Activated CD4-positive, alpha-beta T cell treated with anti-CD3 and anti-CD28 coated beads for 36 hours (primary cell): ENCODE measurements at regions of chr17 and their contacts with region 1.

Region 1: GRCh38 chr17:50865984-50866774 is at the start of gene TOB1:
- DNase-seq: peak; percentile 99
- ATAC-seq: peak; percentile 78
- H3K4me3 Mint-ChIP-seq: peak within 1 kb of the TSS; percentile 96
- H3K27ac Mint-ChIP-seq: peak within 1 kb of the TSS; percentile 98
- H3K4me1 Mint-ChIP-seq: peaks cover 44% of the 10 kb centered on the region
- H3K27me3 Mint-ChIP-seq: no peaks in the 10 kb centered on the region
- total RNA-seq, gene TOB1: 31.3 to 43.0 TPM

Region 2: GRCh38 chr17:50213026-50214022 is 652.9 kb before region 1 on chr17:
- CTCF ChIA-PET with region 1: no interaction called
- POLR2A ChIA-PET with region 1: no interaction called
- intact Hi-C with region 1: no loop called
- DNase-seq: peak; percentile 81
- ATAC-seq: peak; percentile 99
- H3K4me3 Mint-ChIP-seq: no peak overlapping the region
- H3K27ac Mint-ChIP-seq: no peak overlapping the region
- H3K4me1 Mint-ChIP-seq: peaks cover 16% of the 10 kb centered on the region
- H3K27me3 Mint-ChIP-seq: peaks cover 4% of the 10 kb centered on the region

Region 3: GRCh38 chr17:50345432-50346312 is 520.5 kb before region 1 on chr17 and contains the start of gene XYLT2:
- CTCF ChIA-PET with region 1: no interaction called
- POLR2A ChIA-PET with region 1: no interaction called
- intact Hi-C with region 1: loop called in 1 of 2 experiments (anchors 2 kb)
- DNase-seq: peak; percentile 95
- ATAC-seq: peak; percentile 91
- H3K4me3 Mint-ChIP-seq: peak within 1 kb of the TSS; percentile 90
- H3K27ac Mint-ChIP-seq: peak within 1 kb of the TSS; percentile 94
- H3K4me1 Mint-ChIP-seq: peaks cover 32% of the 10 kb centered on the region
- H3K27me3 Mint-ChIP-seq: no peaks in the 10 kb centered on the region
- total RNA-seq, gene XYLT2: 29.8 to 30.4 TPM

Region 4: DNA sequence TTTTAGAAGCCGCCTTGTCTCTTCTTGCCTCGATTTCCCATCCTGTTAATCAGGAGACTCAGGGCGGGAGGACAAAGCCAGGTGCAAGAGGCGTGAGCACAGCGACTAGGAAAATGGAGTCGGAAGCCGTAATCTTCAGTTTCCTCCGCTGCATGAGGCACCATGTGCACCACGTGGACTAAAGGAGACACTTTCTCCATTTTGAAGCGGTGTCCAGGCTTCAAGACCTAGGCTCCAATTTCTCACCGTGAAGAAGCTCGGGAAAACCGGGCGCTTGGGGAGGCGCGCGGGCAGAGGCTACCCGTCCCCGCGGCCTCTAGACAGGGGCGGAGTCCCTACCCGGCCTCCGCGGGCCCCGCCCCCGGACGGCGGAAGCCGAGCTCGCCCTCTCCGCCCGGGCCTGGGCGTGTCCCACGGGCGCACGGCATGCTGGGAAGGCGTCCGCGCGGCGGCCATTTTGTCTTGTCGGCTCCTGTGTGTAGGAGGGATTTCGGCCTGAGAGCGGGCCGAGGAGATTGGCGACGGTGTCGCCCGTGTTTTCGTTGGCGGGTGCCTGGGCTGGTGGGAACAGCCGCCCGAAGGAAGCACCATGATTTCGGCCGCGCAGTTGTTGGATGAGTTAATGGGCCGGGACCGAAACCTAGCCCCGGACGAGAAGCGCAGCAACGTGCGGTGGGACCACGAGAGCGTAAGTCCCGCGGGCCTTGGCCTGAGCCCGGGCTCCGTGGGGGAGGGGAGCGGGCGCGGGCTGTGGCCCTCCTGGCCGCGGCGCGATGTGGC is 146.8 kb before region 1 on chr17 and contains the start of gene LUC7L3:
- CTCF ChIA-PET with region 1: no interaction called
- POLR2A ChIA-PET with region 1: interaction called, 4 read pairs
- intact Hi-C with region 1: loop called in 1 of 2 experiments (anchors 1 kb)
- DNase-seq: peak; percentile 97
- ATAC-seq: peak; percentile 89
- H3K4me3 Mint-ChIP-seq: peak within 1 kb of the TSS; percentile 87
- H3K27ac Mint-ChIP-seq: peak within 1 kb of the TSS; percentile 99
- H3K4me1 Mint-ChIP-seq: peaks cover 22% of the 10 kb centered on the region
- H3K27me3 Mint-ChIP-seq: no peaks in the 10 kb centered on the region
- total RNA-seq, gene LUC7L3: 112 to 120 TPM

Region 5: GRCh38 chr17:50909765-50910605 is 43.8 kb after region 1 on chr17:
- CTCF ChIA-PET with region 1: interaction called, 3 read pairs
- POLR2A ChIA-PET with region 1: interaction called, 14 read pairs
- intact Hi-C with region 1: loop called (anchors 1 kb)
- DNase-seq: peak; percentile 91
- ATAC-seq: peak; percentile 88
- H3K4me3 Mint-ChIP-seq: no peak overlapping the region
- H3K27ac Mint-ChIP-seq: peak overlapping the region; percentile 81
- H3K4me1 Mint-ChIP-seq: peaks cover 64% of the 10 kb centered on the region
- H3K27me3 Mint-ChIP-seq: no peaks in the 10 kb centered on the region

Region 6: GRCh38 chr17:50944054-50944901 is 78.1 kb after region 1 on chr17:
- CTCF ChIA-PET with region 1: interaction called, 8 read pairs
- POLR2A ChIA-PET with region 1: interaction called, 16 read pairs
- intact Hi-C with region 1: loop called (anchors 1 to 2 kb)
- DNase-seq: peak; percentile 88
- ATAC-seq: peak; percentile 89
- H3K4me3 Mint-ChIP-seq: peak overlapping the region; percentile 71
- H3K27ac Mint-ChIP-seq: peak overlapping the region; percentile 81
- H3K4me1 Mint-ChIP-seq: peaks cover 23% of the 10 kb centered on the region
- H3K27me3 Mint-ChIP-seq: no peaks in the 10 kb centered on the region

Region 7: DNA sequence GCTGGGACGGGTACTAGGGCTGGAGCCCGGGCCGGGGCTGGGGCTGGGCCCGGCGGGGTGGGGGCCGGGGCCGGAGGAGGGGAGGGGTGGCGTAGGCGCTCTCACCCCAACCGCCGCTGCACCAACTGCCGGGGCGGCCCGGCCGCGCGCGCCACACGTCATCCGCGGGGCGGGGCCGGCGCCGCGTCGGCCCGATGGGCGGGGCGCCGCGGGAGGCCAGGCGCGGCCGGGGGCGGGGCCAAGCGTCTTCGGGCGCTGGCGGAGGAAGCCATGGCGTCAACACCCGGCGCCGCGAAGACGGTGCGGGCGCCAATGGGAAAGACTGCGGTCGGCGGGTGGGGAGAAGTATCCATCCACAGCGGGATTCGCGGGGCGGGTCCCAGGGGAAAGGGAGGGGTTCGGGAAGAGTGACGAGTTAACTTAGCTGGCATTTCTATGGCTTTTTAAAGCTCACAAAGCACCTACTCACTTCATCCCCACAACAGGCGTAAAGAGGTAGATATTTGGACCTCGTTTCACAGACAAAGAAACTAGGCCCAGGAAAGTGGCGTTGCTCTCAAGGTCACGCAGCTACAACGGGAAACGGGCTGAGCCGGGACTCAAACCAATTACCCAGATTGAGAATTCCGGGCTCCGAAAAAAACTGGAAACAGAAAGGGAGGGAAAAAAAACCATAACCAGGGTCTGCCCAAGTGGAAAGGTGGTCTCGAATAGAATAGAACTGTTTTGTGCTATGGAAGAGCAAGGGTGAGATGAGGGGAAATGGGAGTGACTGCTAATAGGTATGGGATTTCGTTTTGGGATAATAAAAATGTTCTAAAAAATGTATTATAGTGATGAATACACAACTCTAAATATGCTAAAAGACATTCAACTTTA is 254.8 kb after region 1 on chr17 and contains the start of gene SPAG9:
- CTCF ChIA-PET with region 1: interaction called, 4 read pairs
- POLR2A ChIA-PET with region 1: interaction called, 4 read pairs
- intact Hi-C with region 1: loop called (anchors 1 to 2 kb)
- DNase-seq: peak; percentile 95
- ATAC-seq: peak; percentile 62
- H3K4me3 Mint-ChIP-seq: peak within 1 kb of the TSS; percentile 89
- H3K27ac Mint-ChIP-seq: peak within 1 kb of the TSS; percentile 100
- H3K4me1 Mint-ChIP-seq: peaks cover 51% of the 10 kb centered on the region
- H3K27me3 Mint-ChIP-seq: no peaks in the 10 kb centered on the region
- total RNA-seq, gene SPAG9: 48.0 to 88.2 TPM

Region 8: DNA sequence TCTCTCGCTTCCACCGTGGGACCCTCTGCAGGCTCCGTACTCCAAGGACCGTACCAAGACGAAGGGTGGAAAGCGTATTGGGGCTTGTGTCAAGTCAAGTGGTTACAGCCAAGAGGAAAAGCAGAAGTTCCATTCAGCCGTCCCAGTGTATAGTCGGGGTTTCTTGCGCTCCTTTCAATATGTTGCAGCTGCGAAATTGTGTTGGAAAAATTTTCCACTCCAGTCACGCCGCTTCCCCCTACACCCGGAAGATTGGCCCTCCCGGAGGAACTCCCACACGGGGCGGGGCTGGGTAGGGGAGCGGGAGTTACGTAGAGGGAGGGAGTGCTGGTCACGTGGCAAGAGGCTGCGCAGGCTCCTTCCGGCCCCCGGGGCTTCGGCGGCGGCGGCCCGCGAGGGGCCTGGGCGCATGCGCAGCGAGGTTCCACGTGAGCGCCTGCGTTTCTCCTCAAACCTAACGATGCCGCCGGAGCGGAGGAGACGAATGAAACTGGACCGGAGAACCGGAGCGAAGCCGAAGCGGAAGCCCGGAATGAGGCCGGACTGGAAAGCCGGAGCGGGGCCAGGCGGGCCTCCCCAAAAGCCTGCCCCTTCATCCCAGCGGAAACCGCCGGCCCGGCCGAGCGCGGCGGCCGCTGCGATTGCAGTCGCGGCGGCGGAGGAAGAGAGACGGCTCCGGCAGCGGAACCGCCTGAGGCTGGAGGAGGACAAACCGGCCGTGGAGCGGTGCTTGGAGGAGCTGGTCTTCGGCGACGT is 394.1 kb after region 1 on chr17 and contains the start of gene UTP18:
- CTCF ChIA-PET with region 1: no interaction called
- POLR2A ChIA-PET with region 1: no interaction called
- intact Hi-C with region 1: loop called in 1 of 2 experiments (anchors 1 kb)
- DNase-seq: peak; percentile 98
- ATAC-seq: peak; percentile 84
- H3K4me3 Mint-ChIP-seq: peak within 1 kb of the TSS; percentile 84
- H3K27ac Mint-ChIP-seq: peak within 1 kb of the TSS; percentile 97
- H3K4me1 Mint-ChIP-seq: peaks cover 61% of the 10 kb centered on the region
- H3K27me3 Mint-ChIP-seq: no peaks in the 10 kb centered on the region
- total RNA-seq, gene UTP18: 49.3 to 74.0 TPM